ENCODE measurements at regions of chr3 and their contacts with region 1.

Region 1: DNA sequence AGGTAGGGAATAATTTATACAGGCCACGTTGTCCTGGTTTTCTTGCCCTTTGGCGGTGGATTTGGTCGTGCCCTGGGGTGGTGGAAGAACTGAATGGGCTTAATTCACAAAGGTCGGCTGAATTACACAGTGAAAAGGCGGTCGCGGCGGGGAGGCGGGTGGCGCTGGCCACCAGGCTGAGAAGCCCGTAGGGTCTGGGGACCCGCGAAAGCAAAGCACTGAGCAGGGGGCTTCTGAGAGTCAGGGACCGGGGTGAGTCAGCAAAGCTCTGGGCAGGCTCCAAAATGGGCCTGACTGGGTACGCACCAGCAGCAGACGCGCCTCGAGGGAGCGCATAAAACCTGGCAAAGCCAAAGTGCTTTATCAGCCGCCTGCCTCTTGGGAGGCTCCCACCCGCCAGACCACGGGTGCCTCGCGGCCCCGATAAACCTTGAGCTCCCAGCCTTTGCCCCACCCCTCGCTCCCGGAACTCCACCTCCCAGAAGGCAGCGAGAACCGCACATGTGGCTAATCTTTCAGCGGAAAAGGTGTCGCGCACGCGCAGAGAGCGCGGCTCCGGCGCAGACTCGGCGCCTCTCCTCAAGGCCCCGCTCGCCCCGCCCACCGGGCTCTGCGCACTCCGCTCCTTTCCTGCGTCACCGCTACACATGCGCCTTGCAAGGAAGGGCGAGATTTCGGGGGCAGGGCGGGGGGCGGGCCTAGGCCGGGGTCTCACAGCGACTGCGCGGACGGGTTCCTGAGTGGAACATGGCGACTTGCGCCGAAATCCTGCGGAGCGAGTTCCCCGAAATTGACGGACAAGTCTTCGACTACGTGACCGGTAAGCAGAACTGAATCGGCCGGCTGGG is at the start of gene ABCF3:
- DNase-seq: peak; percentile 99
- H3K4me3 ChIP-seq: peak within 1 kb of the TSS; percentile 5 to 92 (median 54)
- H3K27ac ChIP-seq: peak within 1 kb of the TSS; percentile 64
- H3K4me1 ChIP-seq: peaks cover 14% of the 10 kb centered on the region
- H3K27me3 ChIP-seq: no peaks in the 10 kb centered on the region
- CTCF ChIP-seq: no peak
- POLR2A ChIP-seq: peak; percentile 87
- total RNA-seq, gene ABCF3: 65.6 and 68.8 TPM in 2 replicates

Region 2: GRCh38 chr3:184135149-184135910 is 50.4 kb before region 1 on chr3 and contains the start of gene EIF2B5:
- CTCF ChIA-PET with region 1: interaction called, 4 read pairs
- POLR2A ChIA-PET with region 1: no interaction called
- dilution Hi-C with region 1: no loop called
- intact Hi-C with region 1: loop called (anchors 1 kb)
- DNase-seq: peak; percentile 96
- H3K4me3 ChIP-seq: peak within 1 kb of the TSS; percentile 67 to 92 (median 90)
- H3K27ac ChIP-seq: peak within 1 kb of the TSS; percentile 56
- H3K4me1 ChIP-seq: peaks cover 27% of the 10 kb centered on the region
- H3K27me3 ChIP-seq: no peaks in the 10 kb centered on the region
- CTCF ChIP-seq: peak; percentile 26 to 41
- POLR2A ChIP-seq: peak; percentile 77
- total RNA-seq, gene EIF2B5: 38.8 and 44.7 TPM in 2 replicates

Measured in endothelial cell of umbilical vein (primary cell).